ENCODE measurements at regions of chr1 and their contacts with region 1.

Region 1: GRCh38 chr1:53945433-53946251 is at the start of gene IFT25:
- DNase-seq: peak; percentile 97 to 99 (median 98)
- H3K4me3 ChIP-seq: peak within 1 kb of the TSS; percentile 71
- H3K4me3 Mint-ChIP-seq: peak within 1 kb of the TSS; percentile 96 to 99 (median 97)
- H3K27ac ChIP-seq: peak within 1 kb of the TSS; percentile 83
- H3K27ac Mint-ChIP-seq: peak within 1 kb of the TSS; percentile 94 to 99 (median 96)
- H3K4me1 ChIP-seq: peaks cover 38% of the 10 kb centered on the region
- H3K4me1 Mint-ChIP-seq: peaks cover 39 to 63% (median 49%) of the 10 kb centered on the region in 3 donors
- H3K27me3 ChIP-seq: no peaks in the 10 kb centered on the region
- H3K27me3 Mint-ChIP-seq: no peaks in the 10 kb centered on the region
- total RNA-seq, gene IFT25: 57.2 to 57.8 TPM

Region 2: DNA sequence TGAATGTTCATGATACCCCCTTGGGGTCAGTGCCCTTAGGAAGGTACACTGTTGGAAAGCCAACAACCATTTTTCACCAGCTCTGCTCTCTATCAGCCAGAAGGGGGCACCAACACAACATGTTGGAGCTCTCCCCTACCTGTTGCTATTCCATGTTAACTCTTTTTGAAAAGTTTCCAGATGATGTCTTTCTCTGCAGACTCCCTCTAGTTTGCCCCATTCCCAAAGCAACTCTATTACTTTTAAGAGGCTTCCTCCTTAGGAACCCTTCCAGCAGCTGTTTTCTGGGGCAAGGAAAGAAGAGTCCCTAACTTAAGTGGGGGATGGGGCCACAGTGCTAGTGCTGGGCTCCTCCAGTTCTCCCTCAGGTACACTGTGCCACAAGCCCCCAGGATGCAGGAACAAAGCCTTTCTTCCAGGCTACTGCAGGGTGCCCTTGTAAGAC is 84.7 kb before region 1 on chr1:
- CTCF ChIA-PET with region 1: interaction called, 27 read pairs
- POLR2A ChIA-PET with region 1: no interaction called
- DNase-seq: peak in 4 of 5 donors; percentile 31 to 64 (median 46)
- H3K4me3 ChIP-seq: no peak overlapping the region
- H3K4me3 Mint-ChIP-seq: no peak overlapping the region
- H3K27ac ChIP-seq: no peak overlapping the region
- H3K27ac Mint-ChIP-seq: peak overlapping the region in 1 of 8 donors; percentile 9
- H3K4me1 ChIP-seq: no peaks in the 10 kb centered on the region
- H3K4me1 Mint-ChIP-seq: peaks cover 0 to 4% (median 3%) of the 10 kb centered on the region in 3 donors
- H3K27me3 ChIP-seq: no peaks in the 10 kb centered on the region
- H3K27me3 Mint-ChIP-seq: no peaks in the 10 kb centered on the region

Region 3: GRCh38 chr1:53889304-53890298 is 56.0 kb before region 1 on chr1 and contains the start of gene YIPF1:
- CTCF ChIA-PET with region 1: interaction called, 13 read pairs
- POLR2A ChIA-PET with region 1: interaction called, 8 read pairs
- DNase-seq: peak; percentile 78 to 88 (median 83)
- H3K4me3 ChIP-seq: peak within 1 kb of the TSS; percentile 84
- H3K4me3 Mint-ChIP-seq: peak within 1 kb of the TSS; percentile 84 to 100 (median 97)
- H3K27ac ChIP-seq: peak within 1 kb of the TSS; percentile 60
- H3K27ac Mint-ChIP-seq: peak within 1 kb of the TSS; percentile 78 to 98 (median 92)
- H3K4me1 ChIP-seq: peaks cover 19% of the 10 kb centered on the region
- H3K4me1 Mint-ChIP-seq: peaks cover 37 to 57% (median 53%) of the 10 kb centered on the region in 3 donors
- H3K27me3 ChIP-seq: no peaks in the 10 kb centered on the region
- H3K27me3 Mint-ChIP-seq: peaks cover 0 to 1% of the 10 kb centered on the region in 2 donors
- total RNA-seq, gene YIPF1: 17.2 to 17.4 TPM

Region 4: GRCh38 chr1:53959664-53960250 is 14.1 kb after region 1 on chr1:
- CTCF ChIA-PET with region 1: interaction called, 16 read pairs
- POLR2A ChIA-PET with region 1: no interaction called
- DNase-seq: peak in 2 of 5 donors; percentile 37 to 42
- H3K4me3 ChIP-seq: no peak overlapping the region
- H3K4me3 Mint-ChIP-seq: no peak overlapping the region
- H3K27ac ChIP-seq: no peak overlapping the region
- H3K27ac Mint-ChIP-seq: no peak overlapping the region
- H3K4me1 ChIP-seq: no peaks in the 10 kb centered on the region
- H3K4me1 Mint-ChIP-seq: peaks cover 0 to 13% (median 8%) of the 10 kb centered on the region in 3 donors
- H3K27me3 ChIP-seq: no peaks in the 10 kb centered on the region
- H3K27me3 Mint-ChIP-seq: no peaks in the 10 kb centered on the region

Region 5: GRCh38 chr1:54052934-54053744 is 107.5 kb after region 1 on chr1 and contains the starts of genes TCEANC2 and TMEM59:
- CTCF ChIA-PET with region 1: interaction called, 3 read pairs
- POLR2A ChIA-PET with region 1: interaction called, 24 read pairs
- DNase-seq: peak; percentile 94 to 99 (median 98)
- H3K4me3 ChIP-seq: peak within 1 kb of the TSS; percentile 93
- H3K4me3 Mint-ChIP-seq: no peak within 1 kb of the TSS
- H3K27ac ChIP-seq: peak within 1 kb of the TSS; percentile 93
- H3K27ac Mint-ChIP-seq: no peak within 1 kb of the TSS
- H3K4me1 ChIP-seq: peaks cover 46% of the 10 kb centered on the region
- H3K4me1 Mint-ChIP-seq: peaks cover 35 to 60% (median 58%) of the 10 kb centered on the region in 3 donors
- H3K27me3 ChIP-seq: no peaks in the 10 kb centered on the region
- H3K27me3 Mint-ChIP-seq: no peaks in the 10 kb centered on the region
- total RNA-seq, gene TCEANC2: 10.9 to 11.4 TPM
- total RNA-seq, gene TMEM59: 140 to 149 TPM

Measured in CD8-positive, alpha-beta memory T cell (primary cell).